HCT116 (cell line): ENCODE measurements at regions of chr1 and their contacts with region 1.

Region 1: DNA sequence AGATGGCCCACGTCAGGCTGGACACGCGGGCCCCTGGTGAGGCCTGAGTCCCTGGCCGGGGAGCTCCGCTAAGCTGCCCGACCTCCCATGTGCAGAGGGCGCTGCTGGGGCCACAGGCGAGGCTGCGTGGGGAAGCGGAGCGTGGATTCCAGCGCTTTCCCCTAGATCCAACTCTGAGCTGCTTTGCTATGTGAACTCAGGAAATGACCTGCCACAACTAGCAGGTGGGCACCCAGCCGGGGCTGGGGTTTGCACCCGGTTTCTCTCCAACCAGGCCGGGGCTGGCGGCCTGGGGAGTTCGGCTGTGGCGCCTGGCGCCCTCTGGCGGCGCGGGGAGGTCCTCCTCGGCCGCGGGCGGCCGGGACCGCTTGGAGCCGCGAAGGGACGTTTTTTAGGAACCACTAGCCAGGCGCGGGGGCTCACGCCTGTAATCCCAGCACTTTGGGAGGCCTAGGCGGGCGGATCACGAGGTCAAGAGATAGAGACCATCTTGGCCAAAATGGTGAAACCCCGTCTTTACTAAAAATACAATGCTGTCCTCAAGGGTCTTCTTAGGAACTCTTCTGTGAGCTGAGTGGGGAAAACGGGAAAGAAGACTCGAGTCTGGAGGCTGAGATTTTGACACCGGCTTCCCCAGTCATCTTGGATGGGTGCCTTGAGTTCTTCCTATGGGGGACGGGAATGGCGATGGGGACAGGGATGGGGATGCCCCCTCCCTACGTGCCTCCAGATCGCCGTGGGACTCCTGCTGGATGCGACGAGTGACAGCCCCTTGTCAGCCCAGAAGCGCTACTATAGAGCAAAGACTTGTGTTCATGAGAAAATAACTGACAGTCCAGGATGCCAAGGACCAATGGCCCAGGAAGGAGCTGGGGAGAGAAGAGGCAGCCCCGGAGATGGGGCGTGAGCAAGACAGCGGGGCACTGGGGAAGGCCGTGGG is 12.6 kb downstream of the PYCR2 start:
- DNase-seq: peak; percentile 34
- ATAC-seq: peak; percentile 96
- H3K4me3 ChIP-seq: peak overlapping the region in 1 of 2 experiments; percentile 38; a peak in 1 of 4 replicates
- H3K27ac ChIP-seq: no peak overlapping the region
- H3K4me1 ChIP-seq: peaks cover 0 to 11% of the 10 kb centered on the region in 2 experiments; a peak in 3 of 4 replicates
- H3K27me3 ChIP-seq: no peaks in the 10 kb centered on the region
- CTCF ChIP-seq: peak; percentile 90 to 99 (median 95)
- POLR2A ChIP-seq: no peak
- RAD21 ChIP-seq: peak; percentile 89

Region 2: GRCh38 chr1:225474986-225475820 is 436.3 kb before region 1 on chr1:
- CTCF ChIA-PET with region 1: interaction called, 6 read pairs
- POLR2A ChIA-PET with region 1: no interaction called
- RAD21 ChIA-PET with region 1: interaction called in 1 of 2 experiments, 4 read pairs
- intact Hi-C with region 1: loop called (anchors 1 kb)
- DNase-seq: peak; percentile 40
- ATAC-seq: peak; percentile 92
- H3K4me3 ChIP-seq: no peak overlapping the region
- H3K27ac ChIP-seq: no peak overlapping the region; the same call in 1 of the 2 replicates
- H3K4me1 ChIP-seq: peaks cover 3 to 10% of the 10 kb centered on the region in 2 experiments; a peak in 3 of 4 replicates
- H3K27me3 ChIP-seq: no peaks in the 10 kb centered on the region
- CTCF ChIP-seq: peak; percentile 100
- POLR2A ChIP-seq: no peak
- RAD21 ChIP-seq: peak; percentile 100